Ovary (tissue), 10 donors: ENCODE measurements at regions of chr2 and their contacts with region 1.

Region 1: DNA sequence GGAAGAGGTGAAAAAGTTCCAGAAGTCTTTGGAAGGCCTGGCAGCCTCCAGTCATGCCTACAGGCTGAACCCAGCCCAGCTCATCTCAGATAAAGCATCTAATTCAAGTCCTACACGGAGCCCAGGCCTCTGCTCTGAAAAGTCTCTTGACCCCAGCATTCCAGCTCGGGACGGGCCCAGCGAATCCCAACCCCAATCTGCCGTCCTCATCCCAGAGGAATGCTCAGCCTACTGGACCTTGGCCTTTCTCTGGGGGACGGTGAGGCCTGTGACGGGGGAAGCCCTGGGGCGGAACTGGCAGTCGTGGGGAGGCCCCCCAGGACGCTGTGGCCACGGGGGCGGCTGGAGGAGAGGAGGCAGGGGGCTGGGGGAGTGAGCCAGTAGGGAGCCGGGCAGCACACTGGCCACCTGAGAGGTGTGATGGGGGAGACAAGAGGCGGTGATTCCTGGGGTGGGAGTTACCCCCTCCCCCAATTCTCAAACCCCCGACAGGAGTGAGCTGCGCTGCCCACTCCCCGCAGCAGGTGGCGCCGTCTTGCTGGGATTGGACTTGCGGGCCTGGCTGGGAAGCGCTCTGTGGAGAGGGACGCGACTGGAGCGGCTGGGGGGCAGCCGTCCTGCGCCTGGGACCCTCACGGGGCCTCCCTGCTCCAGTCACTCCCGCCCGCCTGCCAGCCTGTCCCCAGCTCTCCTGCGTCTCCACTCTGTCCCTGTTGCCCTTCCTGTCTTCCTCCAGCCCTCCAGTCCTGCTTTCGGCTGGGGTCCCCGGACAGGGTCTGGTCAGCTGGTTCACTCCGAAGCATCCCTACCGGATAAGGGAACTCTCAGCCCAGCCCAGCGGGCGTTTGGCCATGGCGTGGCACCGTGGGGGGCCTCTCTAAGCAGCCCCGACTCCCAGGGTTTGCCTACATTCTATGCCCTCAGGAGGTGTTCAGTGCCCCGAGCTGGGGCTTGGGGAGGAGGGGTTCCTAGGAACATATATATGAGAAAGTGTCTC is 182.6 kb upstream of the HAAO start:
- DNase-seq: peak; percentile 85 to 92 (median 89)
- H3K4me3 ChIP-seq: peak overlapping the region; percentile 35
- H3K27ac ChIP-seq: peak overlapping the region; percentile 64 to 90
- H3K4me1 ChIP-seq: peaks cover 16% of the 10 kb centered on the region
- H3K27me3 ChIP-seq: no peaks in the 10 kb centered on the region
- CTCF ChIP-seq: peak; percentile 89 to 98 (median 96)
- EP300 ChIP-seq: no peak
- POLR2A ChIP-seq: peak; percentile 7

Region 2: GRCh38 chr2:43018179-43019024 is 43.4 kb after region 1 on chr2:
- intact Hi-C with region 1: loop called in 3 of 4 experiments (anchors 5 to 10 kb)
- DNase-seq: peak; percentile 92 to 98 (median 94)
- H3K4me3 ChIP-seq: no peak overlapping the region
- H3K27ac ChIP-seq: peak overlapping the region; percentile 31 to 86
- H3K4me1 ChIP-seq: peaks cover 7% of the 10 kb centered on the region
- H3K27me3 ChIP-seq: no peaks in the 10 kb centered on the region
- CTCF ChIP-seq: peak in 1 of 3 donors; percentile 6
- EP300 ChIP-seq: peak; percentile 84
- POLR2A ChIP-seq: peak; percentile 85

Region 3: GRCh38 chr2:43024515-43025011 is 49.5 kb after region 1 on chr2:
- intact Hi-C with region 1: loop called in 3 of 4 experiments (anchors 5 to 10 kb)
- DNase-seq: peak; percentile 70 to 82 (median 80)
- H3K4me3 ChIP-seq: no peak overlapping the region
- H3K27ac ChIP-seq: peak overlapping the region; percentile 20 to 34
- H3K4me1 ChIP-seq: peaks cover 7% of the 10 kb centered on the region
- H3K27me3 ChIP-seq: no peaks in the 10 kb centered on the region
- CTCF ChIP-seq: peak; percentile 63 to 85 (median 78)
- EP300 ChIP-seq: no peak
- POLR2A ChIP-seq: no peak

Region 4: DNA sequence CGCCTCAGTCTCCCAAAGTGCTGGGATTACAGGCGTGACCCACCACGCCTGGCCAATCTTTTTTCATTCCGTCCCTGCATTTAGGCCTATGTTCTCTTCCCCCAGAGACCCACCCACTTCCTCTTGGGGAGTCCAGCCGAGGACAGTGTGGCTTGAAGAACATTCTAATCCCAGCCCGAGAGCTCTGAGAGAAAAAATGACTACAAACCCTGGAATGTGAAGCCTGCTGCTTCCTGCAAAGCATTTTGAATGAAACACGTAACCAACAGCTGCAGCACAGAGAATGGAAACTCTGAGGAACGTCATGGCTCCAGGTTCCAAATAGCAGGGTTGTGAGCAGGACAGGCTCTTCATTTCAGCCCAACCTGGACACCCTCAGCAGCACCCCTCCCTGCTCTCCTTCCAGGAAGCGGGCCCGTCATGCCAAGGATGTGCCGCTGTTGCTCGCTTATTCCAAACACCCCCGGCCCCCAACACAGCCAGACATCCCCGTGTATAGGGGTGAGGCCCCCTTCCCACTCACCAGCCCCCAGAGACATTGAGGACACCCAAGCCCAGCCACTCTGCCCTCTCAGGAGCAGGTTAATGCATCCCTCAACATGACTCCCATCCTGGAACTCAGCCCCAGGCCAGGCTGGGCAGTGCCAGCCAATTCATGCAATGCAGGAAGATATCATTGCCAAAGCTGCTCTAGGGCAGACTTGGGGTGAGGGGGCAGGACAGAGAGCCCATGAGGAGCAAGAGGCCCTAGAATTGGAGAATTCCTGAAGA is 111.6 kb after region 1 on chr2:
- intact Hi-C with region 1: loop called in 1 of 4 experiments (anchors 10 kb)
- DNase-seq: peak; percentile 61 to 84 (median 74)
- H3K4me3 ChIP-seq: no peak overlapping the region
- H3K27ac ChIP-seq: peak overlapping the region; percentile 61 to 76
- H3K4me1 ChIP-seq: peaks cover 31% of the 10 kb centered on the region
- H3K27me3 ChIP-seq: no peaks in the 10 kb centered on the region
- CTCF ChIP-seq: no peak
- EP300 ChIP-seq: peak; percentile 77
- POLR2A ChIP-seq: peak; percentile 21

Region 5: DNA sequence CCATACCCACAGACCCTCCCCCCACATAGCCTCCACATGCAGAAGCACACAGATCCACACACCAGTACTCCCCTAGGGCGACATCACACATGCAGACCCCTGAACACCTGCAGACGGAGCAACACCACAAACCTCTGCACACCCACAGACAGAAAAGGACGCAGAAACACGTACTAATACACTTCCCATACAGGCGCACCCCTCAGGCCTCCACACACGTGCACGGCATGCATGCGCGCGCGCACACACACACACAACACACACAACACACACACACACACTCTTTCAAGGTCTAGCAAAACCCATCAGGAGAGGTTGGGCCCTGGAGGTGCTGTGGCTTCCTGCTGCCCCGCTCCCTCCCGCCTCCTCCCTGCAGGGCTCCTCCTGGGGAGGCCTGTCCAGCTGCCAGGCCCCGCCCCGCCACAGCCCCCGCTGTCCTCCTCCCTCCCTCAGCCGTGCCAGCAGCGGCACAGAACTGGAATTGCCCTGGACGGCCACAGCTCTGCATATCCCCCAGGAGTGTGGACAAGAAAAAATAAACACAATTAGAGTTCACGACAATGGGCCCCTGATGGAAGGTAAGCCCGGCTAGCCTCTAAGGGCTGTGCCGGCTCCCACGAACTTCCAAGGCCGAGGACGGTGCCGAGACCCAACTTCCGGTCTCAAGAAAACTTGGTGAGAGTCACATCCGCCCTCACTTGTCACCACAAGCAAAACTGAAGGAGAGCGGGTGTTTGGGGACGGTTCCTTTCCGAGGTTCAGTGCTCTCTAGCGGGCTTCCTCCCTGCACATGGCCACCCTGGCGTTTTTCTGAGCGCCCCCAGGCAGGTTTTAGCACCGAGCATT is 244.6 kb after region 1 on chr2:
- intact Hi-C with region 1: loop called in 1 of 4 experiments (anchors 2 kb)
- DNase-seq: peak; percentile 80 to 88 (median 84)
- H3K4me3 ChIP-seq: peak overlapping the region; percentile 35
- H3K27ac ChIP-seq: peak overlapping the region; percentile 73 to 90
- H3K4me1 ChIP-seq: peaks cover 27% of the 10 kb centered on the region
- H3K27me3 ChIP-seq: no peaks in the 10 kb centered on the region
- CTCF ChIP-seq: no peak
- EP300 ChIP-seq: no peak
- POLR2A ChIP-seq: peak; percentile 31

Region 6: DNA sequence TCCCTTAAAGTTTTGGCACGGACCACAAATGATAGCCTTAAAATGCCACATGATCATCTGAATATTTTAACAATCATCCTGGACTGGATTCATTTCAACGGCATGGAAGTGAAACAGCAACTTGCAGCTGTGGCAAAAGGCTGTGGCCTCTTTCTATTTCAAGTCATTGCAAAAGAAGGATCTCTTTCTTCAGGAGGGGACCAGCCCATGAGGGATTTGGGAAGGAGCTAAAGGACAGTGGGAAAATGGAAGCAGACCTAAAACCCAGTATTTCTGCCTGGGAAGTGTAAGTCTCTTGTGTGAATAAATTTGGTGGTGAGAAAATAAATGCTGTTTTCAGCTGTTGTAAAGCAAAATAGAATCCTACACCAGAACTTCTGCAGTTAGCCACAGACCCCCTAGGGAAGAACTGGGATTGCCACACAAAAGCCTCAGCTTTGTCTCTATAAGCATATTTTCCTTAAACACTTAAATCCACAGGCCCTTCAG is 358.7 kb after region 1 on chr2:
- intact Hi-C with region 1: loop called in 1 of 4 experiments (anchors 10 kb)
- DNase-seq: no peak
- H3K4me3 ChIP-seq: no peak overlapping the region
- H3K27ac ChIP-seq: peak overlapping the region in 1 of 2 donors; percentile 50
- H3K4me1 ChIP-seq: peaks cover 32% of the 10 kb centered on the region
- H3K27me3 ChIP-seq: no peaks in the 10 kb centered on the region
- CTCF ChIP-seq: no peak
- EP300 ChIP-seq: no peak
- POLR2A ChIP-seq: no peak

Region 7: GRCh38 chr2:43484323-43484930 is 509.4 kb after region 1 on chr2:
- intact Hi-C with region 1: loop called in 1 of 4 experiments (anchors 10 kb)
- DNase-seq: no peak
- H3K4me3 ChIP-seq: no peak overlapping the region
- H3K27ac ChIP-seq: peak overlapping the region in 1 of 2 donors; percentile 49
- H3K4me1 ChIP-seq: peaks cover 4% of the 10 kb centered on the region
- H3K27me3 ChIP-seq: no peaks in the 10 kb centered on the region
- CTCF ChIP-seq: peak; percentile 35 to 91 (median 67)
- EP300 ChIP-seq: no peak
- POLR2A ChIP-seq: no peak